Esophagus muscularis mucosa (tissue), 4 donors: ENCODE measurements at regions of chr3 and their contacts with region 1.

Region 1: GRCh38 chr3:40452876-40453730 is 4.0 kb upstream of the RPL14 start:
- DNase-seq: peak; percentile 100
- H3K4me3 ChIP-seq: peak overlapping the region; percentile 63 to 80 (median 72)
- H3K27ac ChIP-seq: peak overlapping the region; percentile 88 to 95 (median 90)
- H3K4me1 ChIP-seq: peaks cover 25 to 31% (median 28%) of the 10 kb centered on the region in 4 donors
- H3K27me3 ChIP-seq: no peaks in the 10 kb centered on the region
- CTCF ChIP-seq: no peak
- EP300 ChIP-seq: no peak
- POLR2A ChIP-seq: no peak

Region 2: GRCh38 chr3:40137593-40138295 is 315.4 kb before region 1 on chr3:
- intact Hi-C with region 1: no loop called
- DNase-seq: no peak
- H3K4me3 ChIP-seq: no peak overlapping the region
- H3K27ac ChIP-seq: no peak overlapping the region
- H3K4me1 ChIP-seq: no peaks in the 10 kb centered on the region
- H3K27me3 ChIP-seq: no peaks in the 10 kb centered on the region
- CTCF ChIP-seq: no peak
- EP300 ChIP-seq: no peak
- POLR2A ChIP-seq: no peak

Region 3: GRCh38 chr3:40309418-40309924 is 143.6 kb before region 1 on chr3 and contains the start of gene EIF1B:
- intact Hi-C with region 1: loop called (anchors 5 kb)
- DNase-seq: peak; percentile 100
- H3K4me3 ChIP-seq: peak within 1 kb of the TSS; percentile 86 to 98 (median 92)
- H3K27ac ChIP-seq: peak within 1 kb of the TSS; percentile 92 to 98 (median 98)
- H3K4me1 ChIP-seq: peaks cover 39 to 46% (median 42%) of the 10 kb centered on the region in 4 donors
- H3K27me3 ChIP-seq: no peaks in the 10 kb centered on the region
- CTCF ChIP-seq: peak; percentile 91 to 94 (median 94)
- EP300 ChIP-seq: no peak
- POLR2A ChIP-seq: peak; percentile 79
- total RNA-seq, gene EIF1B: 26.5 to 32.5 (median 30.7) TPM

Region 4: DNA sequence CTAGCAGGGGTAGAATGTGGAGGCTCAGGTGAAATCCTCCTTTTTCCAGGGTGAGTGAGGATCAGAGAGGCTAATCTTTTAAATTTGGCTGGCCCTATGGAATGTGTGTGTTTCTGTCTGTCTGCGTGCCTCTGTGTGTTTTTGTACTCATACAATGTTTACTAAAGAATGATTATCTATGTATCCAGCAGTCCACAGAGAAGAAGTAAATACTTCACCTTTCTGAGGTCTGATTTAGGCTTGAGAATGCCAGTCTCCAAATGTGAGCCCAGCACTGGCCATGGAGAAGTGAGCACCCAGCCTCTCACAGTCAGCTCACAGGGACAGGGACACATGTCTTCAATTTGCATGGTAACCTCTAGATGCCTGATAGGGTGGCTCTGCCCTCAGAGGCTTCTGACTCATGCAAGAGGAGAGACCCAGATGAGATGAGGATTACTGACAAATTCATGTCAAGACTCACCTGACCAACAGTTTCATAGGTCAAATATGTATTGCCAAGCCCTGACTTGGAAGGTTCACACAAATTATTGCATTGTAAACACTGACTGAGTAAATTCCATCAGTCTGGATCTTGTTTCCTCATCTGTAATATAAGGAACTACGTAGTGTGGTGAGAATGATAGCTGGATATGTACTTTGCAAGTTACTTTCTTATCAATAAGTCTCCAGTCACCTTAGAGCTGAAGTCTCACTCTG is 35.1 kb before region 1 on chr3:
- intact Hi-C with region 1: no loop called
- DNase-seq: no peak
- H3K4me3 ChIP-seq: no peak overlapping the region
- H3K27ac ChIP-seq: no peak overlapping the region
- H3K4me1 ChIP-seq: no peaks in the 10 kb centered on the region
- H3K27me3 ChIP-seq: no peaks in the 10 kb centered on the region
- CTCF ChIP-seq: no peak
- EP300 ChIP-seq: no peak
- POLR2A ChIP-seq: no peak

Region 5: GRCh38 chr3:40524568-40525285 is 71.6 kb after region 1 on chr3 and contains the start of gene ZNF621:
- intact Hi-C with region 1: loop called (anchors 5 kb)
- DNase-seq: peak; percentile 95
- H3K4me3 ChIP-seq: peak within 1 kb of the TSS; percentile 67 to 93 (median 82)
- H3K27ac ChIP-seq: peak within 1 kb of the TSS; percentile 82 to 92 (median 90)
- H3K4me1 ChIP-seq: peaks cover 17 to 34% (median 22%) of the 10 kb centered on the region in 4 donors
- H3K27me3 ChIP-seq: no peaks in the 10 kb centered on the region
- CTCF ChIP-seq: no peak
- EP300 ChIP-seq: no peak
- POLR2A ChIP-seq: peak; percentile 62
- total RNA-seq, gene ZNF621: 12.9 to 22.8 (median 16.8) TPM